ENCODE measurements at regions of chr21 and their contacts with region 1.

Region 1: DNA sequence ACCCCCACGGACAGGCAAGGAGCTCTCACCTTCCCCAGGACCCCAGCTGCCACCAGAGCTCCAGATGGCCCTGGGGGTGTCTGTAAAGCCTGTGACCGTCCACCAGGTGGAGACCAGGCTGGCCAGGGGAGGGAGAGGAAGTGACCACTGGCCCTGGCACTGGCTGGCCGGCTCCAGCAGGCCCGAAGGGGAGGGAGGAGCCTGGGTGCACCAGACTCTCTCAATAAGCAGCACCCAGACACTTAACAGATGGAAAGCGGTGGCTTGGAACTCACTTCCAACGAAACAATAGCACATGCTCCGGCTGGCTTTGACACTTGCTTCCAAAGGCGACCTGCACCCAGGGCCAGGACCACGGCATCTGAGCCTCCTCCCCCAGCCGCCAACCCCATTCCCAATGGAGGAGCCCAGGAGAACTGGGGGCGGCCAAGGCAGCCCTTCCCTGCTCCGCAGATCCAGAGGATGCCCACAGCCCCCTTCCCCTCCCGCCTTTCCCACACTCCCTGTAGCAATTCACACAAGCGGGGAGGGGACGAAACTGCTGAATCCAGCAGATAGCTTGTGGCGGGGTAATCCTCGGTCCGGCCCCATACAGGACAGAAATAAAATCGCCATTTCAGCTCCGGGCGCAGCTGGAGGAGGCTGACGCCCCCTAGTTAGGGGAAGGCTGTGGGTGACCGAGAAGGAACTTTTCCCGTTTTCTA is 742 bp upstream of the PDE9A start:
- DNase-seq: no peak
- ATAC-seq: peak; percentile 79
- H3K4me3 ChIP-seq: no peak overlapping the region
- H3K27ac ChIP-seq: no peak overlapping the region
- H3K4me1 ChIP-seq: no peaks in the 10 kb centered on the region
- H3K27me3 ChIP-seq: no peaks in the 10 kb centered on the region; the same call in 1 of the 2 replicates
- CTCF ChIP-seq: peak; percentile 18; the same call in 1 of the 2 replicates

Region 2: DNA sequence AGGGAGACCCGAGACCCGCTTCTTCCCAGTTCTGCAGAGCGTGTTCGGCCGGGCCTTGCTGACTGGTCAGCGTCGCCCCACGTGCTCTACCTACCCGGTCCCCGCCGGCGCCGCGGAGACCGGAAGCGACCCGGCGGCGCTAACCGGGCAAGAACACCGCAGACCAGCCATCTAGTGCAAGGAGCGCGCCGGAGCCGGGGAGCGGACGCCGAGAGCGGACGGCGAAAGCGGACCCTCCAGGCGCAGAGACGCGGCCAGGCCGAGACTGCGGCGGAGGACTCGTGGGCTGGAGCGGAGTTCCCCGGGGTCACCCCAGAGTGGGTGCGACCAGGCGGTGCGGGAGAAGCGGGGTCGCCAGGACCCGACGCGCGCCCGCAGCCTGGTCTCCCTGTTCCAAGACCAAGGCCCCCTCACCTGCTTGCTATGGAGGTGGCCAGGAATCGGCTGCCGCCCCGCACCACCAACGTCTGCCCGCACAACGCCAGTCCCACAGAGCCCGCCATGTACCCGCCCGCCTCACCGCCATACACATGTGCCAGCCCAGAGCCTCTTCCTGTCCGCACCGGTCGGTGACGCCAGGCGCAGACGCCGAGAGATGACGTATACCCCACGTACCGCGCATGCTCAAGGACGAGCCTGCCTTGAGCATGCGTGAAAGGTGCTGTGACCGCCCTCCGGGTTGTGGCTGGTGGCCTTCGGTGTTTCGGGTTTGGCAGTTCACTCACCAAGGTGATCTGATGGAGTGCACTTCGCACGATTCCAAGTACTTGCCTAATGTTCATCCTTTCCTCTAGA is 226.5 kb after region 1 on chr21 and contains the start of gene WDR4:
- CTCF ChIA-PET with region 1: no interaction called
- POLR2A ChIA-PET with region 1: interaction called, 12 read pairs
- in situ Hi-C with region 1: no loop called
- intact Hi-C with region 1: no loop called
- DNase-seq: peak; percentile 83
- ATAC-seq: peak; percentile 96
- H3K4me3 ChIP-seq: peak within 1 kb of the TSS; percentile 68 to 77
- H3K27ac ChIP-seq: peak within 1 kb of the TSS; percentile 90
- H3K4me1 ChIP-seq: peaks cover 3% of the 10 kb centered on the region; the same call in 1 of the 2 replicates
- H3K27me3 ChIP-seq: no peaks in the 10 kb centered on the region
- CTCF ChIP-seq: no peak
- total RNA-seq, gene WDR4: 36.7 TPM

Measured in Panc1 (cell line).